ENCODE measurements at regions of chr12 and their contacts with region 1.

Region 1: DNA sequence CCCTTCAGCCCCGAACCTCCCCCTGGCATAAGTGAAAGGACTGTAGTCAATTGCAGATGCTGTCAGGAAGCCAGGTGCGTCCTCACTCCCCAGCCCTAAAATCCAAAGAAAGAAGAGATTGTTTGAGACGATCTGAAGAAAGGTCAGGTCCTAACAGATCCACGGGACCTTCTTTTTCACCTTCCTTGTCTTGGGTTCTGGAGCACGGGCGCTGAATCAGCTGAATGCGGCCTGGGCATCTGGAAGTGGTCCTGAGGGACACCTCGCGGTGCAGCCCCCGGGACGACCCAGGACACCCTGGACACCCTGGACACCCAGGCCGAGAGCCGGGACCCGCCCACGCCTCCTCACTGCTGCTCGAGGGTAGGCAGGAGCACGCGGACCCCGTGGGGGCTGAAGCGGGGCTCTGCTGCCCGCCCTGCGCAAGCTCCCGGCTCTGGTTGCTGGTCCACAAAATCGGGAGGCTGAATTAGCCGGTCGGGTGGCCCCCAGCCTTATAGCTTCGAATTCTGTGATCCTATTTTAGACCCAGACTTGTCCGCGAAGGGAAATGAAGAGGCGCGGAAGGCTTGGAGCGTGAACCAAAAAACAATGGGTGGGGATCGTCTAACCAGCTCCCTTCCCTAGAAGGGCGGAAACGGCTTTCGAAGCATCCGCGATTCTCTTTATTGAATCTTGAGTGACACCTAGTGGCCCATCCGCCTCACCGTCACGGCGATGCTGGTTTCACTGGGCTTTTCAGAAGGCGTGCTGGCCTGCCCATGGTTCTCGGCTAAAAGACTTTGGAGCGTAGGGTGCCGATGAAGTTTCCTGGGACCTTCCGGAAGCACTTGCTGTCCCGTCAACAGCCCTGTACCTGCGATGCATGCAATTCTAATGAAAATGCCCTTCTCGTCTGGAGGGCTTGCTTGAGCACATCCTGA is 46.4 kb upstream of the PLXNC1 start:
- DNase-seq: peak; percentile 87 to 89
- H3K4me3 ChIP-seq: peak overlapping the region; percentile 32
- H3K4me1 ChIP-seq: peaks cover 6% of the 10 kb centered on the region; the same call in 1 of the 2 replicates
- H3K27me3 ChIP-seq: no peaks in the 10 kb centered on the region; the same call in 1 of the 2 replicates

Region 2: DNA sequence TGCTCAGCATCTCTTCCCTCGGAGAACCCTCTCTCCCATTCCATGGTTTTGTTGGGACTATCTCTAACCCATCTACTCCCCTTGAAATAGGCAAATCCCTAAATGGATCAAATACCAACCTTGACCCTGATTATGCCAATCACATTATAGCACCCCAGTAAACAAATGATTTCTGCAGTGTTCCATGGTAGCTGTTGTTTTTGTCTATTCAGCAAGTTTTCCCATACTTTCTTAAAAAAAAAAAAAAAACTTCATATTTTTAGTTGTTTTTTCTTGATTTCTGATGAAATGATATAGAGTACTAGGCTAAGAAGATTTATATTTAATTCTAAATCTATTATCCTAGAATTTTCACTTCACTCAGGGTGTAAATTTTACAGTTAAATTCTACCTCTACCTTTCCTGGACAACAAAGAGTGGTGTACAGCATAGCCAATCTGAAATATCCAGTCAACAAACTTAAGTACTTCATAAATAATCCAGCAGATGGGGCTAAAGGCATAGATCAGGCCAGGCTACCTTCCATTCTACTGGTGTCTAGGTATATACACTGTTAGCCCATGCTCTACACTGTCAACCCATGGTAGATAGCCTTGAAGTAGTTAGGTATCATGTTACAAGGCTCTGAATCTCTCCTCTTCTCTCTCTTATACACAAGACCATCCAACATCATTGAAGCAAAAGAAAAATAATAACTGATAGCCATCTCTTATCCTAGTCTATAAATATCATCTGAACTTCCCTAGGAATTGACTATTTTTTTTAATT is 1317.0 kb before region 1 on chr12:
- in situ Hi-C with region 1: loop called (anchors 25 kb)
- DNase-seq: peak; percentile 39 to 84
- H3K4me3 ChIP-seq: no peak overlapping the region
- H3K4me1 ChIP-seq: no peaks in the 10 kb centered on the region
- H3K27me3 ChIP-seq: no peaks in the 10 kb centered on the region

Region 3: GRCh38 chr12:93002293-93003054 is 1099.5 kb before region 1 on chr12:
- in situ Hi-C with region 1: loop called (anchors 25 kb)
- DNase-seq: no peak
- H3K4me3 ChIP-seq: no peak overlapping the region
- H3K4me1 ChIP-seq: peaks cover 29% of the 10 kb centered on the region
- H3K27me3 ChIP-seq: no peaks in the 10 kb centered on the region

Region 4: GRCh38 chr12:93507165-93507564 is 594.8 kb before region 1 on chr12:
- in situ Hi-C with region 1: loop called (anchors 5 kb)
- DNase-seq: no peak
- H3K4me3 ChIP-seq: no peak overlapping the region
- H3K4me1 ChIP-seq: no peaks in the 10 kb centered on the region; the same call in 1 of the 2 replicates
- H3K27me3 ChIP-seq: no peaks in the 10 kb centered on the region

Region 5: GRCh38 chr12:93773122-93773871 is 328.7 kb before region 1 on chr12:
- in situ Hi-C with region 1: loop called (anchors 5 kb)
- DNase-seq: no peak
- H3K4me3 ChIP-seq: no peak overlapping the region
- H3K4me1 ChIP-seq: peaks cover 29% of the 10 kb centered on the region
- H3K27me3 ChIP-seq: no peaks in the 10 kb centered on the region